PC-9 (cell line): ENCODE measurements at regions of chr5 and their contacts with region 1.

Region 1: DNA sequence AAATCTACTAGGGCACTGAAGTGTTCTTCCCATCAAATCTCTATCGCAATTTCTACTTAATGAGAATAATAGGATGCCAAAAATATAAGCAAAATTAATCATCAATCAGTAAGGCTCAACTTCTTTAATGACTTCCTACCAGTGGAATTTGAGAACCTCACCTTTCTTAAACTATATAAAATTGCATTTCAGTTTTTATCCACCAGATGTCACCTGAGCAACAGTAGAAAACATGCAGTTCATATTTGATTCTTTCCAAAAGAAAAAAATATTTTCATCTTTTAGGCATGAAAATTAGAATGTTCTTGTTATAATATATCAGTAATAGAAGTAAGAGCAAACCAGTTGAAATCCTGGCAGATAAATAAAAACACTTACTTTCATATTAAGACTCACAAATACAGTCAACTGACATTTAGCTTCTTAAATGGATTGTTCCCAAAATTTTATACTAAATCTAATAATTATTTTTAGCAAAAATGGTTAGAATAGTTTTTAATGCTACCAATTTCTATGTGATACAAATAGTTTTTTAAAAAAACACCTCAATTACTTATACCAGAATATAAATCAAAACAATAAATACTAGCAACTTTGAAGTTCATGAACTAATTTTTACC is 13.4 kb upstream of the CCDC112 start:
- DNase-seq: peak in 1 of 2 experiments; percentile 68
- H3K4me3 ChIP-seq: no peak overlapping the region
- H3K27ac ChIP-seq: no peak overlapping the region
- H3K4me1 ChIP-seq: peaks cover 21% of the 10 kb centered on the region
- H3K27me3 ChIP-seq: no peaks in the 10 kb centered on the region
- CTCF ChIP-seq: peak; percentile 85

Region 2: DNA sequence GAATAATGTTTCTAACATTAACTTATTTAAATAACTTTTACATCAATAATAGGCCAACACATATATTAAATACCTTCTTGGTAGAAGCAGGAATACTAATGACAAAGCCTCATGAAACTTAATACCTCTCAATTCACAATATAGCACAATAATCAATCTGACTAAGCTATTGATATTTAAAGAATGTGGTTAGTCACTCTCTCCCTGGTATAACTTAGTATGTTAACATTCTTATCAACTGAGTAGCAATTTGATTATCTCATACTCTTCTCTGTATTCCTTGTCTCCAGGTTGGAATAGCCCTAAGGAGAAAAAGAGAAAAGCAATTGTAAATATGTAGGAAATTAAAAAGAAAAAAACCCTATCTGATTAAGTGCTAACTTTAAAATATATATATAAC is 42.2 kb before region 1 on chr5:
- CTCF ChIA-PET with region 1: no interaction called
- POLR2A ChIA-PET with region 1: no interaction called
- intact Hi-C with region 1: no loop called
- DNase-seq: peak in 1 of 2 experiments; percentile 55
- H3K4me3 ChIP-seq: no peak overlapping the region
- H3K27ac ChIP-seq: no peak overlapping the region
- H3K4me1 ChIP-seq: peaks cover 7% of the 10 kb centered on the region
- H3K27me3 ChIP-seq: no peaks in the 10 kb centered on the region
- CTCF ChIP-seq: no peak

Region 3: GRCh38 chr5:115343855-115344254 is 34.0 kb after region 1 on chr5:
- CTCF ChIA-PET with region 1: no interaction called
- POLR2A ChIA-PET with region 1: no interaction called
- intact Hi-C with region 1: no loop called
- DNase-seq: peak in 1 of 2 experiments; percentile 60
- H3K4me3 ChIP-seq: no peak overlapping the region
- H3K27ac ChIP-seq: peak overlapping the region; percentile 89
- H3K4me1 ChIP-seq: peaks cover 30% of the 10 kb centered on the region
- H3K27me3 ChIP-seq: no peaks in the 10 kb centered on the region
- CTCF ChIP-seq: no peak

Region 4: GRCh38 chr5:115579747-115580173 is 269.9 kb after region 1 on chr5:
- CTCF ChIA-PET with region 1: interaction called, 14 read pairs
- POLR2A ChIA-PET with region 1: interaction called, 17 read pairs
- intact Hi-C with region 1: loop called (anchors 1 kb)
- DNase-seq: no peak
- H3K4me3 ChIP-seq: no peak overlapping the region
- H3K27ac ChIP-seq: no peak overlapping the region
- H3K4me1 ChIP-seq: peaks cover 17% of the 10 kb centered on the region; the same call in 1 of the 2 replicates
- H3K27me3 ChIP-seq: no peaks in the 10 kb centered on the region
- CTCF ChIP-seq: no peak

Region 5: DNA sequence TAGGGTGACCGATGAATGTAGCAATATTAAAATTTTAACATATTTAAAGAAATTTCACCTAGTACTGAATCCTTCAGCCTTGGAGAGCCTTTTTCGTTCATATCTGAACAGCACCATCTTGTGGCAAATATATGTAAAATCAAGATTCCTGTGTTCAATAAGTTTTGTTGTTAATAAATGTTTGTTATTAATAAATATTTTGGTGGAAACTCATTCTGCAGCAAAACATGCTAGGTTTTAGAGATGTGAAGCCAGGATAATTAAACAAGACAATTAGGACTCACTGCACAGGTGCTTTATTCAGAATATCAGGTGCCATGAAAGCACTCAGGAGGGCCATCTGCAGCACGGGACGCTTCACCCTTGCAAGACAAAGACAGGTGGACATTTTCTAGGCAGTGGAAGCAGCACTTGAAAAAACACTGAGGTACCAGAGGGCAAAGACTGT is 276.8 kb after region 1 on chr5:
- CTCF ChIA-PET with region 1: no interaction called
- POLR2A ChIA-PET with region 1: no interaction called
- intact Hi-C with region 1: loop called (anchors 1 kb)
- DNase-seq: no peak
- H3K4me3 ChIP-seq: no peak overlapping the region
- H3K27ac ChIP-seq: no peak overlapping the region
- H3K4me1 ChIP-seq: peaks cover 10% of the 10 kb centered on the region; the same call in 1 of the 2 replicates
- H3K27me3 ChIP-seq: no peaks in the 10 kb centered on the region
- CTCF ChIP-seq: peak; percentile 82